ENCODE measurements at regions of chr4 and their contacts with region 1.

Region 1: GRCh38 chr4:108492816-108493595 is 127.4 kb upstream of the RPL34 start:
- DNase-seq: peak; percentile 39
- H3K4me3 ChIP-seq: no peak overlapping the region
- H3K27ac ChIP-seq: no peak overlapping the region
- H3K4me1 ChIP-seq: no peaks in the 10 kb centered on the region
- CTCF ChIP-seq: peak; percentile 73

Region 2: GRCh38 chr4:108018040-108018883 is 474.7 kb before region 1 on chr4:
- CTCF ChIA-PET with region 1: no interaction called
- POLR2A ChIA-PET with region 1: no interaction called
- intact Hi-C with region 1: loop called (anchors 1 kb)
- DNase-seq: peak; percentile 80
- H3K4me3 ChIP-seq: no peak overlapping the region
- H3K27ac ChIP-seq: no peak overlapping the region
- H3K4me1 ChIP-seq: peaks cover 5% of the 10 kb centered on the region
- CTCF ChIP-seq: peak; percentile 98

Region 3: GRCh38 chr4:108473221-108473620 is 19.8 kb before region 1 on chr4:
- CTCF ChIA-PET with region 1: no interaction called
- POLR2A ChIA-PET with region 1: no interaction called
- intact Hi-C with region 1: no loop called
- DNase-seq: no peak
- H3K4me3 ChIP-seq: no peak overlapping the region
- H3K27ac ChIP-seq: no peak overlapping the region
- H3K4me1 ChIP-seq: no peaks in the 10 kb centered on the region
- CTCF ChIP-seq: no peak

Measured in OCI-LY7 (cell line).